ENCODE measurements at regions of chr1 and their contacts with region 1.

Region 1: DNA sequence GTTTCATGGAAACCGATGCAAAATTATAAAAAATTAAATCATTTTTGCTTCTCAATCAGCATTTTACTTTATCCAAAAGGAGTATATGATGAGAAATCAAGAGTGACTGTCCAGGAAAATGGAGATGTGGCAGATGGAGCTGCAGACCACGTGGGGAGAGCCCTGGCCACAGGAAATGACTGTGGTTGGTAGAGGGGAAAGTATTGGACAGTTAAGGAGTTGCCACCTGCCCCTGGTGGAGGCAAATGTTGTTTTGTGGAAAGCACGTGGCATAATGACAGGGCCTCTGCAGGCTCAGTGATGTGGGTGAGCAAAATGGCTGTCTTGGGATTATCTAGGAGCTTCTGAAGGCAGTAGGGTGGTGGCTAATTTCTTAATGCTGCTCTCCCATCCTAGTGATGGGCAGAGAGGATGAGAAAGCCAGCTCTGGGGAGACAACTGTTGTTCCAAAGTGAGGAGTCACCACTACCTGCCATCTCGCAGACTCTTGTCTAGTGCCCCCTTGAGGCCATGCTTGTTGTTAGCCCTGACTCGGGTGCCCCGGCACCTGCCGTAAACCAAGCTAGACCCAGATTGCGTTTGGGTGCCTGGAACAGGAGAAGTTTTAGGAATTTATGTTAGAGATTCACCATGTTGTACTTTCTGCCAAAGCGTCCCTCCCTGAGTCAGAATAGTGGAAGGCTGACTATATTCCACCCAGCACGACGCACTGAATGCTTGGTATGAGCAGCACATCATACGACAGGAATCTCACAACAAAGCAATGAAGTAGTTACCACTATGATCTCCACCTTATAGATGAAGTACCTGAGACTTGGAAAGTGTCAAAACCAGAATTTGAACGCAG is 144.0 kb downstream of the ROR1 start:
- DNase-seq: peak; percentile 42
- H3K4me3 Mint-ChIP-seq: no peak overlapping the region
- H3K27ac Mint-ChIP-seq: no peak overlapping the region
- H3K4me1 Mint-ChIP-seq: no peaks in the 10 kb centered on the region
- H3K27me3 Mint-ChIP-seq: no peaks in the 10 kb centered on the region

Region 2: GRCh38 chr1:63615768-63616420 is 301.9 kb before region 1 on chr1:
- CTCF ChIA-PET with region 1: no interaction called
- intact Hi-C with region 1: loop called (anchors 1 kb)
- DNase-seq: peak; percentile 58
- H3K4me3 Mint-ChIP-seq: no peak overlapping the region
- H3K27ac Mint-ChIP-seq: no peak overlapping the region
- H3K4me1 Mint-ChIP-seq: peaks cover 4% of the 10 kb centered on the region
- H3K27me3 Mint-ChIP-seq: no peaks in the 10 kb centered on the region

Region 3: DNA sequence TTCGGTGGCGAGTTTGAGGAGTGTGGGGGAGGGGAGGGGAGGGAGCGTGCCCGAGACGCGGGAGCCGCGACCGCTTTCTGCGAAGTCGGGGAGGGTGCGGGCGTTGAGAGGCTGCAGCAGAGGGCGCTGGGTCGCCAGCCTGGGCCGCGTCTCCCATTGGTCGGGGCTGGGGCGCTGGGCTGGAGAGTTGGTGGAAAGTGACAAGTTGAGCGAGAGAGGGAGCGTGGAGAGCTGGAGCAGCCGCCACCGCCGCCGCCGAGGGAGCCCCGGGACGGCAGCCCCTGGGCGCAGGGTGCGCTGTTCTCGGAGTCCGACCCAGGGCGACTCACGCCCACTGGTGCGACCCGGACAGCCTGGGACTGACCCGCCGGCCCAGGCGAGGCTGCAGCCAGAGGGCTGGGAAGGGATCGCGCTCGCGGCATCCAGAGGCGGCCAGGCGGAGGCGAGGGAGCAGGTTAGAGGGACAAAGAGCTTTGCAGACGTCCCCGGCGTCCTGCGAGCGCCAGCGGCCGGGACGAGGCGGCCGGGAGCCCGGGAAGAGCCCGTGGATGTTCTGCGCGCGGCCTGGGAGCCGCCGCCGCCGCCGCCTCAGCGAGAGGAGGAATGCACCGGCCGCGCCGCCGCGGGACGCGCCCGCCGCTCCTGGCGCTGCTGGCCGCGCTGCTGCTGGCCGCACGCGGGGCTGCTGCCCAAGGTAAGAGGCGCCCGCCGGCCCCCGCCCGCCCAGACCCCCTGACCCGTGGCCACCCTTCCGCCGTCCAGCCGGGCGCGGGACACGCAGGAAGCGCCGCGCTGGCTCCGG is 143.8 kb before region 1 on chr1 and contains the start of gene ROR1:
- CTCF ChIA-PET with region 1: no interaction called
- intact Hi-C with region 1: loop called (anchors 5 kb)
- DNase-seq: peak; percentile 87
- H3K4me3 Mint-ChIP-seq: peak within 1 kb of the TSS; percentile 76
- H3K27ac Mint-ChIP-seq: no peak within 1 kb of the TSS
- H3K4me1 Mint-ChIP-seq: peaks cover 17% of the 10 kb centered on the region
- H3K27me3 Mint-ChIP-seq: peaks cover 52% of the 10 kb centered on the region
- total RNA-seq, gene ROR1: 0.10 to 0.14 TPM

Region 4: DNA sequence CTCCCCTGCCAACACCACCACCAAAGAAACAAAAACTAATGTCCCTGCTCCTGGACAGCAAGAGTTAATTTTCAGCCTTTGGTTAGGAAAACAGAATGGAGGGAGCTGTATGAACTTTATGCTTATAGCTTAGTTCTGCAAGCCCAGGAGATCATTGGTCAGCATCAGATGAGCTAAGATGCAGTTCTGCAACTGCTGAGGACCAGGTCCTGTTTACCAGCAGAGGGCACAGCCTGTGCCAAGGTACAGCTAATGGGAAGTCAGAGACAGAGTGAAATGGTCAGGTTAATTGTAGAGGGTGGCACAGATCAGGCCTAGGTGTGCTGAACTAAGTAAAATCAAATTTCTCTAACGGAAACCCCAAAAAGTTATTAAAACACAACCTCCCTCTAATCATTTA is 17.3 kb after region 1 on chr1:
- CTCF ChIA-PET with region 1: no interaction called
- intact Hi-C with region 1: no loop called
- DNase-seq: no peak
- H3K4me3 Mint-ChIP-seq: no peak overlapping the region
- H3K27ac Mint-ChIP-seq: no peak overlapping the region
- H3K4me1 Mint-ChIP-seq: no peaks in the 10 kb centered on the region
- H3K27me3 Mint-ChIP-seq: no peaks in the 10 kb centered on the region

Measured in activated naive CD4-positive, alpha-beta T cell treated with anti-CD3 and anti-CD28 coated beads for 36 hours (primary cell).